ENCODE measurements at regions of chr3 and their contacts with region 1.

Region 1: DNA sequence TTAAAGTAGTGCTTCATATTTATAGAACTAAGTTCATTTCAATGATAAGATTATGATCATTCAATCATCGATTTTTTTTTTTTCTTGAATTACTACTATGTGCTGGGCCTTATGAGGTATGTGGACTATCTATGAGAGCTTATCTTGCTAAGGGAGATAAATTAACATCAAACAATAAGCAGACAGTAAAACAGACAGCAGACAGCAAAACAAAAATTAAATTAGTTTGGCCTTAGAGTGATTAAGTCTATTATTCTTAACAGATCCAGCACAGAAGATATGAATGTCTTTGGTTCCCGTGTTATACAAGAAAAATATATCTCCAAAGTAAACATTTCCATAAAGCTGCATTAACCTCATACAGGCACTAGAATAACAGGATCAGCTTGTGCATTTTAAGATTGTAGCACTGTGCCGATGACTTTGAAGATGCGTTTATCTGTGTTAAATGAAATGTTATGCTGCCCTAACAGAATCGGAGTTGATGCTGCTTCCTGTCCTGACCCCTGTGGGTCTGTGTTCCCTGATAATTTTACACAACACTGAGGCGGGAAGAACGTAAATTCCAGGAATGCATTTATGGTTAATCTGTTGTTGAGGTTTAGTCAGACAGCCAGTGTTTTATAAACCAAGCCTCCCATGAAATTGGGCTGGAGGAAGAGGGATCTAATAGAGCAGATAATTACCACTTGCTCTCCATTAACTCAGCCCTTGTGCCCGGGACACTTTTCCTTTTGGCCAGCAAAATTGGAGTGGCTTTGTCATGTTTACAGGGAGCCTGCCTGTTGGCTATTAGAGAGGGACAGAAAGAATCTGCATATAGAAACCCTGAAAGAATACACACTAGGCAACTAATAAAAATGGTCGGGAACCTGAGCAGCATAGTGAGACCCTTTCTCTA is 80.8 kb downstream of the GHSR start:
- DNase-seq: no peak

Region 2: DNA sequence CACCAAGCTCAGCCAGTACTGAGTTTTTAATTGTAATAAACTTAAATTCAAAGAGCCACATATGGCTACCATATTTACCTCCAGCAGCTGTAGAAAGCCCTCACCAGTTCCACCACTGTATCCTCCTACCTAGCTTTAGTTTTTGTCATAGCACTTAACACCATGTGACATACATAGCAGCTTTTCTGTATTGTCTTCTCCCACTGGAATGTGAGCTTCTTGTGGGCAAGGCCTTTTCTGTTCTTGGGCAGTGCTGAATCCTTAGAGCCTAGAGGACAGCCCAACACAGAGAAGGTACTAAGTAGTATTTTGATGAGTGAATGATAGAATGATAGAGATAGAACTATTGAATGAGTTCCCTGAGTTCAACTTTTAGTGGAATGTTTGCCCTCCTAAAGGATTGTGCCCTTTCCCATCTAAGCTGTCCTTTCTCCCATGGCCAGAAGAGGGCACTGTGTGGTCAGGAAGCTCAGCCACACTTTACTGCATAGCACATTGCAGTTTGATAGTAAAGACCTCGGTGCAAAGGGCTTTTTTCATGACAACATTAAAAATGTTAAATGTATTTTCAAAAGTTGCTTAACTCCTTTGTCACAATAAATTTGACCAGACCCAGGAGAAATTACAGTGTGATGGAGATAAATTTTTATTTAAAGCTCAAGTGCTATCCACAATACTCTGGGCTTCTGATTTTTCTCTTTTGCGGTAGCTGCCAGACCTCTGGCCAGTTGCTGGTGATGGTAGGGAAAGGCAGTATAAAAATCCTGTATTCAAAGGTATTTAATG is 35.0 kb before region 1 on chr3:
- intact Hi-C with region 1: no loop called
- DNase-seq: no peak

Region 3: GRCh38 chr3:172476347-172476746 is 108.9 kb after region 1 on chr3:
- intact Hi-C with region 1: loop called (anchors 10 kb)
- DNase-seq: no peak

Region 4: GRCh38 chr3:172646439-172647015 is 279.1 kb after region 1 on chr3:
- intact Hi-C with region 1: no loop called
- DNase-seq: no peak

Region 5: GRCh38 chr3:172666873-172667694 is 299.6 kb after region 1 on chr3:
- intact Hi-C with region 1: loop called (anchors 10 kb)
- DNase-seq: peak; percentile 82

Measured in cardiac septum (tissue), 1 donor.